H1 (cell line): ENCODE measurements at regions of chr22 and their contacts with region 1.

Region 1: GRCh38 chr22:19730655-19731360 is 7.5 kb downstream of the GP1BB start:
- DNase-seq: peak in 1 of 2 experiments; percentile 97
- H3K4me3 ChIP-seq: peak overlapping the region in 3 of 4 experiments; percentile 13 to 49 (median 29); a peak in 4 of 8 replicates
- H3K27ac ChIP-seq: no peak overlapping the region
- H3K4me1 ChIP-seq: peaks cover 0 to 4% (median 2%) of the 10 kb centered on the region in 4 experiments; a peak in 2 of 7 replicates
- H3K27me3 ChIP-seq: peaks cover 16 to 46% (median 40%) of the 10 kb centered on the region in 4 experiments
- CTCF ChIP-seq: peak; percentile 92 to 94 (median 94)
- EP300 ChIP-seq: no peak
- POLR2A ChIP-seq: no peak
- RAD21 ChIP-seq: peak; percentile 96 to 98

Region 2: DNA sequence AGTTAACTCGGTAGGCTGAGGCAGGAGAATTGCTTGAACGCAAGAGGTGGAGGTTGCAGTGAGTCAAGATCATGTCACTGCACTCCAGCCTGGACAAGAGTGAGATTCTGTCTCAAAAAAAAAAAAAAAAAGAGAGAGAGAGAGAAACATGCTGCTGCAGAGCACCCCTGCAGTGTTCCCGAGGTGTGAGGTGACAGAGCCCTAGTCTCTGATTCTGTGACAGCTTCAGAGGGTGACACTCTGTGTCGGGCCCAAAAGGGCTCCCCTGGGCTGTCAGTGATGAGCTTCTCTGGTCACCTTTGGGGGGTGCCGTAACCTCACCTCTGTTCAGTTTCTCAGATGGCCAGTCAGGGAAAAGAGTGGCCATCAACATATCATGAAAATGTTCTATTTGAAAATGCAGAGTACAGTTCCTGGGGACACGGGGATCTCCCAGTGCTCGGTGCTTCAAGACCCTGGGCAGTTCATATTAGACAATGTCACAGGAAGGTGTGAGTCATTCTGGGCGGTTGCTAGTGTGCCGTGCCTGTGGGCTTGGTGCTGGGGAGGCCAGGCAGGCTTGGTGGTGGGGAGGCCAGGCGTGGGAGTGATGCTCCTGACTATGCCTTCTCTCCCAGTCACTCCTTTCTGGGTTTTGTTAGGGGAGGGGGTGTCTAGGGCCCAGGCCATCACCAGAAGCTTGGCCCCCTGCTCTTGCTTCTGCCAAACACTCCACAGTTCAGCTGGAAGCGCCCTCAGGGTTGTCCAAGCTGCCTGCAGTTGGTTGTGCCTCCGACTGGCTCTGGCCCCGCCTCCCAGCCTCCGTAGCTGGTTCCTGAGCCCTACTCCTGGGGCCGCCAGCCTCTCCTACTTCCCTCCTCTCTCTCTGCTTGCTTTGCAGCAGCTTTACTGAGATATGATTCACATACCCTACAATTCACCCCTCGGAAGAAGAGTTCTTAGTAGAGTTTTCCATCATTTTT is 154.1 kb before region 1 on chr22:
- CTCF ChIA-PET with region 1: no interaction called
- POLR2A ChIA-PET with region 1: no interaction called
- DNase-seq: no peak
- H3K4me3 ChIP-seq: no peak overlapping the region
- H3K27ac ChIP-seq: no peak overlapping the region
- H3K4me1 ChIP-seq: peaks cover 0 to 3% (median under 1%) of the 10 kb centered on the region in 4 experiments; a peak in 3 of 7 replicates
- H3K27me3 ChIP-seq: no peaks in the 10 kb centered on the region
- CTCF ChIP-seq: peak; percentile 12 to 17 (median 13); a peak in 3 of 4 replicates
- EP300 ChIP-seq: no peak
- POLR2A ChIP-seq: no peak
- RAD21 ChIP-seq: peak; percentile 52 to 61; a peak in 3 of 4 replicates

Region 3: DNA sequence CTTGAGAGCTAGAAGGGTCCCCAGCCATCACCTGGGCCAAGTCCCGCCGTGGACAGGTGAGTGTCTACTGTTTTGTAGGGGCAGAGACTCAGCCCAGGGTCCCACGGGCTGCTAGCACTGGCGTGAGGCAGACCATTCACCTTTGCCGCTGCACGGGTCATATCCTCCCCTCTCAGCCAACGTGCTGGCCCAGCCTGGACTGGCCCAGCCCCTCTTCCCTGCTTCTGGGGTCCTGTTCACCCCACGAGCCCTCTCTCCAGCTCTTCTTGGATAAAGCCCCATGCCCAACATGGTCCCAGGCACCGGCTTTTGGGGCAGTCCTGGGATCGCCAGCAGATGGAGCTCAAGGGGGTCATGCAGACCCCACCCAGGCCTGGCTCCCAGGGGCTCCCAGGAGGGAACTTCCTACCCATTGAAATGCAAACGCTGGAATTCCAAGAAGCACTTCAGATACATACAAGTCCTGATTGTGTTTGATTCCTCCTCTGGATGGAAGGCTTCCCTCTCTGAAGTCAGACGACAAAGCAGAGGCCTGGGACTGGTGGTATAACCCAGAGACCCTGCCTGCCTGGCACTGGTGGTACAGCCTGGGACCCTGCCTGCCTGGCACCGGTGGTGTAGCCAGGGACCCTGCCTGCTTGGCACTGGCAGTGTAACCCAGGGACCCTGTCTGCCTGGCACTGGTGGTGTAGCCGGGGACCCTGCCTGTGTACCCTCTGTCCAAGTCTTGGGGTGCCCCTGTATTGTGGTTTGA is 25.4 kb before region 1 on chr22:
- CTCF ChIA-PET with region 1: interaction called, 16 read pairs
- POLR2A ChIA-PET with region 1: no interaction called
- DNase-seq: peak; percentile 90 to 91
- H3K4me3 ChIP-seq: no peak overlapping the region
- H3K27ac ChIP-seq: peak overlapping the region; percentile 46; the same call in 1 of the 2 replicates
- H3K4me1 ChIP-seq: peaks cover 0 to 24% (median 16%) of the 10 kb centered on the region in 4 experiments; a peak in 6 of 7 replicates
- H3K27me3 ChIP-seq: peaks cover 0 to 8% (median 7%) of the 10 kb centered on the region in 4 experiments; a peak in 4 of 7 replicates
- CTCF ChIP-seq: peak; percentile 71 to 83 (median 72)
- EP300 ChIP-seq: peak in 1 of 2 experiments; percentile 94; a peak in 2 of 3 replicates
- POLR2A ChIP-seq: no peak
- RAD21 ChIP-seq: peak; percentile 33 to 58

Region 4: DNA sequence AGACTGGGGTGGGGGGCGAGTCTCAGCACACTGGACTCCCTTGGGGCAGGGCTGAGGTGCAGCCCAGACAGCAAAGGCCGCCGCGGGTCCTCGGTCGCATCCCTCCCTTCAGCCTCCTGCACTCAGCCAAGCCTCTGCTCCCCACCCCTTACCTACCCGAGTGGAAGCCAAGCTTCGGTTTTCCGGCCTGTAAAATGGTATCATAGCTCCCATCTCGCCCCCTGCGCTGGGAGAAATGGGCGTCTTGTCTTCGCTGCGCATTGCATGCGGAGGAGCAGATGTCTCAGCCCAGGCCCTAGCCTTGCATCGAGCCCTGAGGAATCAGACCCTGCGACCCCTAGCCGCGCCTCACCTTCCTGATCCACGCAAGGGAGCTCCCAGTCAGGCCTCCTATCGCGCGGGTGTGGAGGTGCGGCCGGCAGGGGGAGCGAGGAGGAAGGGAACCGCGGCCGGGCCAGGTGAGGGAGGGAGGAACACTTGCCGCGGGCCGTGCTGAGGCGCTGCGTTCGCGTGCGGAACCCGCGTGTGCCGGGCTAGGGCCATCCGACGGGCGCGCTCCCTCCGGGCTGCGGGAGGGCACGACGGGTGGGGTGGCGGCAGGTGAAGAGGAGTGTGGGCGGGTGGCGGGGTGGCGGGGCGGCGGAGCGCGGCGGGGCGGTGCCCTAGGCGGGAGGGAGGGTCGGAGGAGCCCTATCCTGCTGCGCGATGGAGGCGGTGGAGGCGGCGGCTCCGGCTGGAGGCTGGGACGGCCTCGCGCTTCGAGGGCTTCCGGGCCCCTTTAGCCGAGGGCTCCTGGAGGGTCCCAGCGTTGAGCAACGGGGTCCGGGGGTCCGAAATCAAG is 25.7 kb after region 1 on chr22:
- CTCF ChIA-PET with region 1: interaction called, 168 read pairs
- POLR2A ChIA-PET with region 1: interaction called, 3 read pairs
- DNase-seq: peak in 1 of 2 experiments; percentile 78
- H3K4me3 ChIP-seq: peak overlapping the region in 3 of 4 experiments; percentile 4 to 56 (median 10); a peak in 4 of 8 replicates
- H3K27ac ChIP-seq: no peak overlapping the region
- H3K4me1 ChIP-seq: peaks cover 0 to 38% (median 13%) of the 10 kb centered on the region in 4 experiments; a peak in 5 of 7 replicates
- H3K27me3 ChIP-seq: peaks cover 76 to 92% (median 85%) of the 10 kb centered on the region in 4 experiments
- CTCF ChIP-seq: peak in 2 of 3 experiments; percentile 38 to 39; a peak in 3 of 4 replicates
- EP300 ChIP-seq: no peak
- POLR2A ChIP-seq: no peak
- RAD21 ChIP-seq: peak; percentile 18 to 24; a peak in 2 of 4 replicates

Region 5: GRCh38 chr22:19800761-19801244 is 70.0 kb after region 1 on chr22:
- CTCF ChIA-PET with region 1: interaction called, 25 read pairs
- POLR2A ChIA-PET with region 1: no interaction called
- DNase-seq: no peak
- H3K4me3 ChIP-seq: no peak overlapping the region
- H3K27ac ChIP-seq: no peak overlapping the region
- H3K4me1 ChIP-seq: no peaks in the 10 kb centered on the region; a peak in 1 of 7 replicates
- H3K27me3 ChIP-seq: no peaks in the 10 kb centered on the region
- CTCF ChIP-seq: peak; percentile 46 to 72 (median 69)
- EP300 ChIP-seq: no peak
- POLR2A ChIP-seq: no peak
- RAD21 ChIP-seq: peak; percentile 42 to 51

Region 6: GRCh38 chr22:19903031-19903430 is 172.2 kb after region 1 on chr22:
- CTCF ChIA-PET with region 1: interaction called, 28 read pairs
- POLR2A ChIA-PET with region 1: no interaction called
- DNase-seq: no peak
- H3K4me3 ChIP-seq: no peak overlapping the region
- H3K27ac ChIP-seq: no peak overlapping the region
- H3K4me1 ChIP-seq: peaks cover 5 to 12% (median 12%) of the 10 kb centered on the region in 4 experiments
- H3K27me3 ChIP-seq: no peaks in the 10 kb centered on the region; a peak in 1 of 7 replicates
- CTCF ChIP-seq: no peak
- EP300 ChIP-seq: no peak
- POLR2A ChIP-seq: no peak
- RAD21 ChIP-seq: no peak

Region 7: GRCh38 chr22:19959043-19959586 is 228.3 kb after region 1 on chr22:
- CTCF ChIA-PET with region 1: interaction called, 30 read pairs
- POLR2A ChIA-PET with region 1: no interaction called
- DNase-seq: peak; percentile 81 to 98
- H3K4me3 ChIP-seq: peak overlapping the region; percentile 38 to 61 (median 52); a peak in 7 of 8 replicates
- H3K27ac ChIP-seq: no peak overlapping the region
- H3K4me1 ChIP-seq: peaks cover 0 to 23% (median 18%) of the 10 kb centered on the region in 4 experiments; a peak in 6 of 7 replicates
- H3K27me3 ChIP-seq: no peaks in the 10 kb centered on the region
- CTCF ChIP-seq: no peak
- EP300 ChIP-seq: no peak
- POLR2A ChIP-seq: peak in 1 of 2 experiments; percentile 61; a peak in 2 of 3 replicates
- RAD21 ChIP-seq: no peak